ENCODE measurements at regions of chr10 and their contacts with region 1.

Region 1: DNA sequence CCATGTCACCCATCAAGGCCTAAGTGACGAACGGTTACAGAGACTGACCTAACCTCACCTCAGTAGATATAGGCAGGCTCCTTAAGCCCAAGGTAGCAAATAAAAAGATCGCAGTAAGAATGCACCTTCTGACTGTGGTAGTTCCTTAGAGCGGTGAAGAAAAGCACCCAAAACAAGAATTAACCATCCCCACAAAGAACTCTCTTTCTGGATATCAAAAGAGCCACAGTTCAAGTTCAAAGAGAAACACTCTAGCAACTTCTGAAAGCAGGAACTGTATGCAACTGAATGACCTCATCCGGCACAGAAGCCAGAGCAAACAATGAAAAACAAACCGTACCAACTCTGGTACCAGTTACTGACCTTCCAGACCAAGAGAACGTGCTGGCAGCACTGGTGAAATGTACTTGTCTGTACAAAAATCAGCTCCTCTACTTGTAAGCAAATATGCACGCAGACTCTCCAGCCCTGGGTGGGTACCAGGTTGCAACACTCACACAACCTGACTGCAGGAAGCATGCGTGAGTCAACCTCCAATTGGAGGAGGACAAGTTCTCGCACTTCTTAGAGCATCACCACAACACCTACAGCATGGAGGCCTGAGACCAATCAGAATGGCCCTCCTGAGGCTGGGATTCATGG is 202.7 kb downstream of the FAM107B start:
- DNase-seq: peak; percentile 78
- H3K4me3 Mint-ChIP-seq: peak overlapping the region; percentile 69
- H3K27ac Mint-ChIP-seq: peak overlapping the region; percentile 97
- H3K4me1 Mint-ChIP-seq: peaks cover 81% of the 10 kb centered on the region
- H3K27me3 Mint-ChIP-seq: no peaks in the 10 kb centered on the region

Region 2: GRCh38 chr10:14340051-14340744 is 231.8 kb before region 1 on chr10:
- CTCF ChIA-PET with region 1: no interaction called
- intact Hi-C with region 1: no loop called
- DNase-seq: no peak
- H3K4me3 Mint-ChIP-seq: no peak overlapping the region
- H3K27ac Mint-ChIP-seq: no peak overlapping the region
- H3K4me1 Mint-ChIP-seq: no peaks in the 10 kb centered on the region
- H3K27me3 Mint-ChIP-seq: peaks cover 9% of the 10 kb centered on the region

Region 3: GRCh38 chr10:14583252-14583651 is 11.3 kb after region 1 on chr10:
- CTCF ChIA-PET with region 1: interaction called, 4 read pairs
- intact Hi-C with region 1: loop called (anchors 1 kb)
- DNase-seq: peak; percentile 93
- H3K4me3 Mint-ChIP-seq: peak overlapping the region; percentile 51
- H3K27ac Mint-ChIP-seq: peak overlapping the region; percentile 97
- H3K4me1 Mint-ChIP-seq: peaks cover 84% of the 10 kb centered on the region
- H3K27me3 Mint-ChIP-seq: no peaks in the 10 kb centered on the region